Cardiac septum (tissue), 1 donor: ENCODE measurements at regions of chr4 and their contacts with region 1.

Region 1: GRCh38 chr4:5979976-5980375 is 38.3 kb downstream of the C4orf50 start:
- DNase-seq: peak; percentile 53

Region 2: GRCh38 chr4:5824635-5825034 is 155.3 kb before region 1 on chr4:
- intact Hi-C with region 1: loop called (anchors 5 kb)
- DNase-seq: no peak